Transverse colon (tissue), 4 donors: ENCODE measurements at regions of chr9 and their contacts with region 1.

Region 1: DNA sequence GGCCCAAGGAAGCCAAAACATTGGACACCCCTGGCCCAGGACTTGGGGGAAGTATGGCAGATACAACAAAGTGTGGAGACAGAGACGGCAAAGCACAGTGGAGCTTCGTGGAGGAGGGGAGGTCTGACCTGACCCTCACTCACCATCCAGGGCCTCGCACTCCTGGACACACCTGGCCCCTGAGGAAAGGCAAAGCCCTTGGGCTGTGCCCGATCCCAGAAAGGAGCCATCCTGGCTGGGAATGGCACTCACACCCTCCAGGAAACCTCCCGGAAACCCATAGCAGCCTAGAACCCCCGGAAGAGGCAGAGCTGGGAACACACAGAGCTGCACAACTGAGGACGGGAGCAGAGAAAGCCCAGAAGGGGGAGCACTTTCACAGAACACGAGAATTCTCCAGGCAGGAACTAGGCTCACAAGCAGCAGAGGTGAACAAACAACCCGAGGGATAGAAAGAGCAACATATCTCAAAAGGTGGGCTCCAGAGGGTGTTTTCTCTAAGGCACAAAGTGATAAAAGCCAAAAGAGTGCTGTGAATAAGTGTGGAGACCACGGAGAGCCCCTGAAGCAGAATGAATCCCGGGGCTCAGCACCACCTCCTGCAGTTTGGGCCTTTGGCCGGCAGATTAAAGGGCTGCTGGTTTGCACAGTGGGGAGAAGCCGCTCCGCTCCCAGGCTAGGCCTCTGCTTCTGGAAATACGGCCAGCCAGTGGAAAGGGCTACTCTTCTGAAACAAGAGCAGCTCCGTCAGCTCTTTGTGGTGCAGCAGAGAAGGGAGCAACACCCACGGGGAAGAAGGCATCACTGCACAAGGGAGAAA is 108.2 kb downstream of the UBE2R2 start:
- DNase-seq: peak; percentile 32
- H3K4me3 ChIP-seq: no peak overlapping the region
- H3K27ac ChIP-seq: no peak overlapping the region
- H3K4me1 ChIP-seq: peaks cover 0 to 3% (median 0%) of the 10 kb centered on the region in 4 donors
- H3K27me3 ChIP-seq: no peaks in the 10 kb centered on the region
- CTCF ChIP-seq: peak; percentile 41 to 52 (median 47)
- EP300 ChIP-seq: no peak
- POLR2A ChIP-seq: no peak

Region 2: GRCh38 chr9:33816327-33817252 is 108.6 kb before region 1 on chr9 and contains the start of gene UBE2R2:
- in situ Hi-C with region 1: no loop called
- intact Hi-C with region 1: loop called (anchors 10 kb)
- DNase-seq: peak; percentile 94
- H3K4me3 ChIP-seq: peak within 1 kb of the TSS; percentile 72 to 96 (median 90)
- H3K27ac ChIP-seq: peak within 1 kb of the TSS; percentile 97 to 100 (median 100)
- H3K4me1 ChIP-seq: peaks cover 30 to 65% (median 40%) of the 10 kb centered on the region in 4 donors
- H3K27me3 ChIP-seq: no peaks in the 10 kb centered on the region
- CTCF ChIP-seq: no peak
- EP300 ChIP-seq: no peak
- POLR2A ChIP-seq: peak; percentile 91
- total RNA-seq, gene UBE2R2: 13.9 to 30.8 (median 22.9) TPM

Region 3: DNA sequence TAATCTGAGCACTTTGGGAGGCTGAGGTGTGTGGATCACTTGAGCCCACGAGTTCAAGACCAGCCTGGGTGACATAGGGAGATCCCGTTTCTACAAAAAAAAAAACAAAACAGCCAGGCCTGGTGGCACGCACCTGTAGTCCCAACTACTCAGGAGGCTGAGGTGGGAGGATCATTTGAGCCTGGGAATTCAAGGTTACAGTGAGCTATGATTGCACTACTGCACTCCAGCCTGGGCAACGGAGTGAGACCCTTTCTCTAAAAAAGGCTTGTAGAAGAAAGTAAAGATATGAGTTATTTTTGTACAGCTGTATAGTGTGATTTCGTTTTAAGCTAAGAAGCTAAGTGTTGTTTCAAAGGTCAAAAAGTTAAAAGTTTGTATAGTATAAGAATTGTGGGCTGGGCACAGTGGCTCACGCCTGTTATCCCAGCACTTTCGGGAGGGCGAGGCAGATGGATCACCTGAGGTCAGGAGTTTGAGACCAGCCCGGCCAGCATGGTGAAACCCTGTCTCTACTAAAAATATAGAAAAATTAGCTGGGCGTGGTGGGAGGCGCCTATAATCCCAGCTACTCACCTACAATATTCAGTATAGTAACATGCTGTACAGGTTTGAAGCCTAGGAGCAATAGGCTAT is 89.4 kb before region 1 on chr9:
- in situ Hi-C with region 1: no loop called
- intact Hi-C with region 1: no loop called
- DNase-seq: no peak
- H3K4me3 ChIP-seq: no peak overlapping the region
- H3K27ac ChIP-seq: peak overlapping the region; percentile 18 to 44 (median 26)
- H3K4me1 ChIP-seq: peaks cover 18 to 66% (median 33%) of the 10 kb centered on the region in 4 donors
- H3K27me3 ChIP-seq: no peaks in the 10 kb centered on the region
- CTCF ChIP-seq: no peak
- EP300 ChIP-seq: no peak
- POLR2A ChIP-seq: no peak